Prostate gland (tissue), 2 donors: ENCODE measurements at regions of chr2 and their contacts with region 1.

Region 1: DNA sequence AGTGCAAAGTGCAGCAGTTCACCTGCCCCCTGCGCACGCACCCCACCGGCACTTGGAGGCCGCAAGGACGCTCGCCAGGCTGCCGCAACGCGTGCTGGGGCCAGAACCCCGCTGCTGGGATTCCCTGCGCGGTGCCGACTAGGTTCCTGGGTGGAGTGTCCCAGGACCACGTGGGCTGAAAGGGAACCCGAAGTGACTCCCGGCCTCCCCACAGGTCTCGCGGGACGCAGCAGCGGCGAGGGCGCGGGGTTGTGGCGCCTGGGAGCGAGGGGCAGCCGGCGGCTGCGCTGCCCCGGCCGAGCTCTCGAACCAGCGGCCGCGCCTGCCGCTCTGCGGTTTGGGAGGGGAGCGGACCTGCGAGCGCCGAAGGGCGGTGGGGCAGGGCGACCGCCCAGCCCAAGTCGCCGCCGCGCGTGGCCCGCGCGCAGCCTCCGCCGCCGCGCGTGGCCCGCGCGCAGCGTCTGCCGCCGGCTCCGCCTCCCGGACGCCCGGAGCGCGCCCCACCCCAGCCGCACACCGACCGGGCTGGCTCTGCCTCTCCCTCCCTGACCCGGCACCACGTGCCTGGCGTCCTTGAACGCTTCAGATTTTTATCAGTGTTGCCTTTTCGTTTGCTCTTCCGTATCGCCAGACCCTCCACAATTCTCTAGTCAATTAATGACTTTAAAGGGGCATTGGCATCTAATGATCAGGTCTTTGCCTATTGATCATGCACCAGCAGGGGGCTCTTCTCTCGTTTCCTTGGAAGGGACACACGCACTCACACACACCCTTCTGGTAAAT is at the start of gene FTCDNL1:
- DNase-seq: peak; percentile 47
- H3K4me3 ChIP-seq: peak within 1 kb of the TSS; percentile 56 to 60
- H3K27ac ChIP-seq: peak within 1 kb of the TSS in 1 of 2 donors; percentile 47
- H3K4me1 ChIP-seq: no peaks in the 10 kb centered on the region
- H3K27me3 ChIP-seq: no peaks in the 10 kb centered on the region
- CTCF ChIP-seq: peak in 2 of 4 experiments; percentile 39 to 44
- POLR2A ChIP-seq: no peak
- total RNA-seq, gene FTCDNL1: 4.9 to 5.7 TPM

Region 2: DNA sequence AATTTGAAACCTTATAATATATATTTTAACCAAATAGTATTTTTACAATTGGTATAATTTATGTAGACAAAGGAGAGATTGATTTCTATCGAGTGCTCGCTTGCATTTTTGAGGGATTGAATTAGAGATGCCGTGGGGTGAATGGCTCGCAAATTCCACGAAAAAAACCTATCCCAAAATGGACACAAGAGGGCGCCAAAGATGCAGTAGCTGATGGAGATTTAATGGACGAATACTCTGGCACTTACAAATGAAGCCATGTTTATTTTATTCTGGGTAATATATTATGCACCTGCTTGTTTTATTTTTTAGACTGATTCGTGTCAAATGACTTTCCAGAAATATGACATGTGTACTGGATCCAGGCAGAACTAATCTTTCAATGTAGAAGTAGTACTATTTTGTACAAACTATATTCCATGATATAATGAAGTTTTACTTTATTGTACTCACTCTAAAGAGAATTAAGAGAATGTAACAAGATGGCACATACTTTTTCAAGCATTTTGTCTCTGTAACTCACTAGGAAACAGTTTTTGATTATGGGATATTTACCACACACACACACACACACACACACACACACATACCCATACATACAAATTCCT is 1541.1 kb before region 1 on chr2:
- intact Hi-C with region 1: loop called (anchors 10 kb)
- DNase-seq: no peak
- H3K4me3 ChIP-seq: no peak overlapping the region
- H3K27ac ChIP-seq: no peak overlapping the region
- H3K4me1 ChIP-seq: no peaks in the 10 kb centered on the region
- H3K27me3 ChIP-seq: no peaks in the 10 kb centered on the region
- CTCF ChIP-seq: peak; percentile 55 to 68 (median 59)
- POLR2A ChIP-seq: no peak

Region 3: DNA sequence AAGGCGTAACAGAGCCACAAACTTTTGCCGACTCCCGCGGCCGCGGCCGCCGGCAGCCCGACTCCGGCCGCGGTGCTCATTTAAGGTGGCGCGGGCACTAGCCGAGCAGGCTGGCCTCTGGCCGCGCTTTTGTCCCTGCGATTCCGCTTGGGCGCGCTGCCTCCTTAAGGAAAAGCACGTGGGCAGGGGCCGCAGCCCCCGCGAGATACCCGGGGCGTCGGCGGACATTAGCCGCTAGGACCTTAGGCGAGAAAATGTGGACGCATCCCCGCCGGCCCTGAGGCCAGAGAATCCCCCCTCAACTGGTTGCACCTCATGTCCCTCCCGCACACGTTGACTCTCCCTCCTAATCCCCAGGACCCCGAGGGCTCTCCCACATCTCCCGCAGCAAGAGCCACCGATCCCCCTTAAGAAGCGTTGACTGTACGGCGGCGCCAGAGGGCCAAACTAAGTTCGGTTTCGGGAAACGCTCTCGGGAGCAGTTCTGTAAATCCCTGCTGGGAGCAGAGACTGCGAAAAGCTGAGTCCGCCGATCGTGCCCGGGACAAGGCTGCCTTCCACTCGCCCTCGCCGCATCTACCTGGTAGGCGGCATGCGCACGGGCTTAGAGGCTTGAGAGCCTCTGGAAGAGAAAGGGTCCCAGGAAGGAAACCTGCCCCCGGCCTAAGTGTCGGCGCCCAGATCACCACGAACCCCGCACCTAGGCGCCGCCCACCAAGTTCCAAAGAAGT is 391.5 kb before region 1 on chr2:
- intact Hi-C with region 1: loop called (anchors 10 kb)
- DNase-seq: peak; percentile 89
- H3K4me3 ChIP-seq: peak overlapping the region; percentile 70 to 82
- H3K27ac ChIP-seq: peak overlapping the region; percentile 80 to 84
- H3K4me1 ChIP-seq: no peaks in the 10 kb centered on the region
- H3K27me3 ChIP-seq: no peaks in the 10 kb centered on the region
- CTCF ChIP-seq: peak in 2 of 4 experiments; percentile 2 to 11
- POLR2A ChIP-seq: no peak

Region 4: DNA sequence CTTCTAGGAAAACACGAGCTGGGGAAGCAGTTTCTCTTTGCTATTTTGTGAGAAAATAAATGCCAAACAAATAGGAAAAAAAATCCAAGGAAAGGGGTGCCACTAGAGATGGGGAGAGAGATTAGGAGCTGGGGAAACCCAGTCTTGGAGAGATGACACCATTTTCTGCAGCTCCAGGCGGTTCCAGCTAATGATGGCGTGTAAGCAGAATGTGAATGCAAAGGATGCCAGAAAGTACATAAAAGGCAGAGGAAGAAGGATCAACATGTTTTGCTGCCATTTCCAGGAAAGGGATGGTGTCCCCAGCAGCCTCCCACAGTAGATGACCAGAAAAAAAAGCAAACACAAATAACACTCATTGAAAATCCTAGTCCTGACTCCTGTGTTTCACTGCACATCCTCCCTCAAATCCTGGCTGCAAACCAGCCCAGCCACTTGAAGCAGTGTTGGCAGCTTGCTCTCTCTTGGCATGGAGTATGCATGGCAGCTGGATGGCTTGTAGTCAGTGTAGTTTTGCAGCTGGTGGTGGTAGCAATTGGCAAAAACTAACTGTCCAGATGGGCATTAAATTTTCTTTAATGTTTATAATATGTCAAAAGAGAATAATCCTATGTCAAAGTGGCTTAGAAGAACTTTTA is 93.6 kb before region 1 on chr2:
- intact Hi-C with region 1: loop called (anchors 10 kb)
- DNase-seq: peak; percentile 67
- H3K4me3 ChIP-seq: no peak overlapping the region
- H3K27ac ChIP-seq: no peak overlapping the region
- H3K4me1 ChIP-seq: no peaks in the 10 kb centered on the region
- H3K27me3 ChIP-seq: no peaks in the 10 kb centered on the region
- CTCF ChIP-seq: no peak
- POLR2A ChIP-seq: no peak